BJ (cell line): ENCODE measurements at regions of chr2 and their contacts with region 1.

Region 1: DNA sequence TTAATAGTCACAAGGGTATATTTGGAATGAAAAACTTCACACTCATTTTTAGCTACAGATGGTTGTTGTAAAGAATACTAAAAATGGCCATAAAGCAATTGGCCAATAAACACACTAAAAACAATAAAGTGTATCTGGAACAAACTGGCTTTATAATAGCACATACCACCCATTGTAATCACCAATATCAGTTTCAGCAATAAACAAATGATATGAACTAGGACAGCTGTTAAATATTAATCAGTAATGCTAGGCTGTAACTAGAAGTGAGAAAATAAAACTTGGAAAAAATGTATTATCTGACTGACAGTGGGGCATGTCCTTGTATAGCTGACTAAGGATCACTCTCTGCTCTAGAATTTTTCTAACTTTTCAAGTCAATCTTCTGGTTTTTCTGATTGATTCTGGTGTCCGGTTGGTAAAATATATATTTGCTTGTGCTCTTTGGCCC is 312.5 kb downstream of the RND3 start:
- DNase-seq: no peak
- H3K4me3 ChIP-seq: no peak overlapping the region
- H3K27me3 ChIP-seq: no peaks in the 10 kb centered on the region
- CTCF ChIP-seq: no peak

Region 2: GRCh38 chr2:150191349-150191748 is 16.4 kb after region 1 on chr2:
- CTCF ChIA-PET with region 1: interaction called, 3 read pairs
- POLR2A ChIA-PET with region 1: interaction called, 10 read pairs
- DNase-seq: no peak
- H3K4me3 ChIP-seq: no peak overlapping the region
- H3K27me3 ChIP-seq: no peaks in the 10 kb centered on the region
- CTCF ChIP-seq: no peak